ENCODE measurements at regions of chr1 and their contacts with region 1.

Region 1: DNA sequence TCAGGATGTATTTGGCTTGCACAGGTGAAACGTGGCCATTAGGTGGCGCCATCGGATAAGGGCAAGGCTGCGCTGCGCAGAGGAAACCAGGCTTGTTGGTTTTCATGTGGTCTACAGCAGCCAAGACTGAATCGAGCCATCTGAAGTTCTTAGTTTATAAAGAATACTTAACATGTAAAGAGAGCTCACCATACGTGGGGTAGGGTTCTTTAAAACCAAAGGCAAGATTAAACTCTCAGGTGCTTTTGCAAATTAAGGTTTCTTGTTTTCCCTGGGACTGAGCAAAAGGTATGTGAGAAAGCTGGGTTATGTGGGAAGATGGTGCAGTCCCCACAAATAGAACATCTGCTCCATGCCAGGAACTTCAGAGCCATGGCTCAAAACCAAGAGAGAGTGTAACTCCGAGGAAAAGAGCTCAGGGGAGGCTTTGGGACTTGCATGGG is 9.3 kb downstream of the MASP2 start:
- DNase-seq: peak; percentile 76
- ATAC-seq: peak; percentile 97
- H3K4me3 ChIP-seq: no peak overlapping the region
- H3K27ac ChIP-seq: no peak overlapping the region
- H3K4me1 ChIP-seq: peaks cover 0 to 7% of the 10 kb centered on the region in 2 experiments; a peak in 1 of 4 replicates
- H3K27me3 ChIP-seq: no peaks in the 10 kb centered on the region
- CTCF ChIP-seq: peak; percentile 92 to 99 (median 98)
- POLR2A ChIP-seq: no peak
- RAD21 ChIP-seq: peak; percentile 99

Region 2: DNA sequence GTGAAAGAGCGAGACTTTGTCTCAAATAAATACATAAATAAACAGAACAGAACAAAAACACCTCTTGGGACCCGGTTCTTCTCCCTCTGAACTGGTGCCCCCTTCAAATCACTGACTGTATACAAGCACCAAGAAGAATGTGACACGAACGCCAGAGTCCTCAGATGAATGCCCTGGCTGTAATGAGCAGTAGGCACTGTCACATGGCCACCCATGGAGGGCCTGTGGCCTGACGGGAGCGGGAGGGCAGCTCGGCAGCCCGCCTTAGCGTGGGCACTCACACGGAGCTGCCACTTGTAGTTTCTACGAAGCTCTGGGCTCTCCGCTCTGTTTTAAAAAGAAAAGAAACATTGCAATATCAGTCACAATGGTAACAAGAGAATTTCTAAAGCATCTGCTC is 417.0 kb before region 1 on chr1:
- CTCF ChIA-PET with region 1: no interaction called
- POLR2A ChIA-PET with region 1: no interaction called
- RAD21 ChIA-PET with region 1: no interaction called
- intact Hi-C with region 1: no loop called
- DNase-seq: no peak
- ATAC-seq: no peak
- H3K4me3 ChIP-seq: no peak overlapping the region
- H3K27ac ChIP-seq: no peak overlapping the region
- H3K4me1 ChIP-seq: no peaks in the 10 kb centered on the region
- H3K27me3 ChIP-seq: no peaks in the 10 kb centered on the region
- CTCF ChIP-seq: no peak
- POLR2A ChIP-seq: no peak
- RAD21 ChIP-seq: no peak

Region 3: GRCh38 chr1:11059990-11060830 is 22.4 kb after region 1 on chr1 and contains the start of gene SRM:
- CTCF ChIA-PET with region 1: interaction called, 17 read pairs
- POLR2A ChIA-PET with region 1: interaction called, 4 read pairs
- RAD21 ChIA-PET with region 1: interaction called in 1 of 2 experiments, 4 read pairs
- intact Hi-C with region 1: no loop called
- DNase-seq: peak; percentile 66
- ATAC-seq: peak; percentile 95
- H3K4me3 ChIP-seq: peak within 1 kb of the TSS; percentile 93 to 98
- H3K27ac ChIP-seq: peak within 1 kb of the TSS; percentile 90
- H3K4me1 ChIP-seq: peaks cover 6 to 25% of the 10 kb centered on the region in 2 experiments; a peak in 3 of 4 replicates
- H3K27me3 ChIP-seq: no peaks in the 10 kb centered on the region
- CTCF ChIP-seq: peak in 1 of 3 experiments; percentile 15; a peak in 1 of 6 replicates
- POLR2A ChIP-seq: no peak
- RAD21 ChIP-seq: no peak
- total RNA-seq, gene SRM: 150 TPM

Region 4: GRCh38 chr1:11337580-11338073 is 299.9 kb after region 1 on chr1:
- CTCF ChIA-PET with region 1: interaction called, 3 read pairs
- POLR2A ChIA-PET with region 1: no interaction called
- RAD21 ChIA-PET with region 1: no interaction called
- intact Hi-C with region 1: loop called (anchors 5 kb)
- DNase-seq: peak; percentile 19
- ATAC-seq: peak; percentile 95
- H3K4me3 ChIP-seq: no peak overlapping the region
- H3K27ac ChIP-seq: no peak overlapping the region
- H3K4me1 ChIP-seq: peaks cover 5 to 7% of the 10 kb centered on the region in 2 experiments; a peak in 2 of 4 replicates
- H3K27me3 ChIP-seq: no peaks in the 10 kb centered on the region
- CTCF ChIP-seq: peak; percentile 88 to 98 (median 95)
- POLR2A ChIP-seq: no peak
- RAD21 ChIP-seq: peak; percentile 65

Region 5: DNA sequence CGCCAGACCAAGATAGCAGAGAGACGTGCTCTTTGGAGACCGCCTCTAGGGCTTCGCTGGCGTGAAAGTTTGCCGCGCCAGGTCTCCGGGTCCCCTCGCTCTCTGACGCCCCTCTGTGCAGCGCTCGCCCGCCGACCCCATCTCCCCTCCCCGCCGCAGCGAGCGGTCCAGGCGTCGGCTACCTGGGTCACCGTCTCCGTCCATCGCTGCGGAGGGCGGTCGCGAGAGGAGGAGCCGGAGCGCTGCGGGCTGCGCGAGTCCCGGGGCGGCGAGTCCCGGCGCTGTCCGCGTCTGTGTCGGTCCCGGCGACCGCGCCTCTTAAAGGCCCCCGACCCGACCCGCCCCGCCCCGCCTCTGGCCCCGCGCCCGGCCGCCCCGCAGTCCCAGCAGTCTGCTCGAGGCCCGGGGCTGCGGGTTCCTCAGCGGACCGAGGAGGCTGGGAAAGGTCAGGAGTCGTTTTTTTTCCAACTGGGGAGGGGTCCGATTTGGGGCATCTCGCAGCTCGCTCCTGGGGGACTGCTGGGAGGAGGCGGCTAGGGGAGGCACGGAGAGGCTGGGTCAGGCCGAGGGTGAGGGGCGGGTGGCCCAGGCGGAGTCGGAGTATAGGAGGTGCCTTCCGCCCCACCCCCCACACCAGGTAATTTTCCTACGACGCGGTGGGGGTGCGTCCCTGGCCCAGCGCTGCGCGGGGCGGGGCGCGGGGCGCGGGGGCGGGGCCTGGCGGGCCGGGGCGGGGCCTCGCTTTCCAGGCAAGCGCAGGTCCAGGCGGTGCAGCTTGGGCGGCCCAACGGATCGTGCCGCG is 616.6 kb after region 1 on chr1 and contains the starts of genes FBXO2 and FBXO44:
- CTCF ChIA-PET with region 1: interaction called, 11 read pairs
- POLR2A ChIA-PET with region 1: no interaction called
- RAD21 ChIA-PET with region 1: no interaction called
- intact Hi-C with region 1: no loop called
- DNase-seq: peak; percentile 26
- ATAC-seq: peak; percentile 75
- H3K4me3 ChIP-seq: peak within 1 kb of the TSS; percentile 63 to 80
- H3K27ac ChIP-seq: peak within 1 kb of the TSS; percentile 87
- H3K4me1 ChIP-seq: peaks cover 28 to 53% of the 10 kb centered on the region in 2 experiments; a peak in 3 of 4 replicates
- H3K27me3 ChIP-seq: no peaks in the 10 kb centered on the region
- CTCF ChIP-seq: no peak
- POLR2A ChIP-seq: no peak
- RAD21 ChIP-seq: no peak
- total RNA-seq, gene FBXO2: 81.1 TPM
- total RNA-seq, gene FBXO44: 60.9 TPM

Region 6: GRCh38 chr1:11838349-11839272 is 800.9 kb after region 1 on chr1:
- CTCF ChIA-PET with region 1: no interaction called
- POLR2A ChIA-PET with region 1: no interaction called
- RAD21 ChIA-PET with region 1: no interaction called
- intact Hi-C with region 1: loop called (anchors 10 kb)
- DNase-seq: no peak
- ATAC-seq: peak; percentile 98
- H3K4me3 ChIP-seq: no peak overlapping the region
- H3K27ac ChIP-seq: no peak overlapping the region
- H3K4me1 ChIP-seq: no peaks in the 10 kb centered on the region
- H3K27me3 ChIP-seq: no peaks in the 10 kb centered on the region
- CTCF ChIP-seq: peak; percentile 95 to 99 (median 97)
- POLR2A ChIP-seq: no peak
- RAD21 ChIP-seq: peak; percentile 99

Measured in HCT116 (cell line).